Activated CD4-positive, alpha-beta memory T cell treated with anti-CD3 and anti-CD28 coated beads, Interleukin-2, amount 10 ng/mL, durations not matched to agents 7 days and 5 days (primary cell): ENCODE measurements at regions of chr5 and their contacts with region 1.

Region 1: GRCh38 chr5:132500931-132501630 is 10.5 kb upstream of the IRF1 start:
- DNase-seq: peak; percentile 78
- H3K4me3 Mint-ChIP-seq: no peak overlapping the region
- H3K27ac Mint-ChIP-seq: no peak overlapping the region
- H3K4me1 Mint-ChIP-seq: peaks cover 39% of the 10 kb centered on the region
- H3K27me3 Mint-ChIP-seq: peaks cover 3% of the 10 kb centered on the region

Region 2: GRCh38 chr5:132410451-132411381 is 90.4 kb before region 1 on chr5:
- CTCF ChIA-PET with region 1: interaction called, 16 read pairs
- POLR2A ChIA-PET with region 1: interaction called, 399 read pairs
- DNase-seq: peak; percentile 89
- H3K4me3 Mint-ChIP-seq: peak overlapping the region; percentile 95
- H3K27ac Mint-ChIP-seq: peak overlapping the region; percentile 99
- H3K4me1 Mint-ChIP-seq: peaks cover 59% of the 10 kb centered on the region
- H3K27me3 Mint-ChIP-seq: no peaks in the 10 kb centered on the region

Region 3: DNA sequence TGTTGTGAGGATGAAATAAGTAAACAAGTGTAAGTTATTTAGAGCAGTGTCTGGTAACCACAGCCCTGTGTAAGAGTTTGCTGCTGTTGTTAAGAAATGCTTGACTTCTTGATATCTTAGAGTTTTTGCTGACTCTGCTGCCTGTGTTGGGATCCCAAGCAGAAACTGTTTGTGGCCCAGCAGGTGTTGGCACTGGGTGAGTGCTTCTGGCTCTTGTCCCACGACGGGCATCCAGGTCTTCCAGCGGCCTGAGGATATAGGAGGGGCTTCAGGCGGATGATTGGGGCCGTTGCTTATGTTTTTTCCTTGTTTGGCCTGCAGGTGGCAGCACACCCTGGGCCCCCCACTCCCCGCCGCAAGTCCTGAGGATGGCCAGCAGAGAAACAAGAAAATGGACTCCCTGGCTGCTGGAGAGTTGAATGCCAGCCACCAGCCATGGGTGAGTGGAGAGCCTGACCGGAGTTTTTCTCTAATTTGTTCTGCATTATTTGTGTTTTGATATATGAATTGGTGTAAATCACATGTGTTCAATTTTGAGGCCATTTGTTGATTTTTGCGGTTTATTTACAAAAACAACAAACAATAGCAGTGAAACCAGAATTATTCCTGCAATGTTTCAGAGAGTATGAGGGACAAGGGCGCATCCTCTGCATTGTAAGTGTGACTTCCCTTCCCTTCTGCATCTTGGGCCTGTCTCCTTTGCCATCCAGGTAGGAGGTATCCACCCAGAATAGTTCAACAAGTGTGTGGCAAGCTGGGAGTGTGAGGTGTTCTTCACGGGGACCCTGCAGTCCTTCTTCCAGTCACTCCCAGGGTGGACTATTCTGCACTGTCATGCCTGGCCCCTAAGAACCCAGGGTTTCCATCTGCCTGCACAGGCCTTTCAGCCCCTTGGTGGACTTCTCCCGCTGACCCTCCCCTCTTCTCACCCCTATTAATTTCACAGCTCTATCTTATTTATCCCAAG is 81.3 kb before region 1 on chr5:
- CTCF ChIA-PET with region 1: interaction called, 34 read pairs
- POLR2A ChIA-PET with region 1: interaction called, 1,155 read pairs
- DNase-seq: peak; percentile 72
- H3K4me3 Mint-ChIP-seq: peak overlapping the region; percentile 65
- H3K27ac Mint-ChIP-seq: peak overlapping the region; percentile 91
- H3K4me1 Mint-ChIP-seq: peaks cover 95% of the 10 kb centered on the region
- H3K27me3 Mint-ChIP-seq: no peaks in the 10 kb centered on the region

Region 4: DNA sequence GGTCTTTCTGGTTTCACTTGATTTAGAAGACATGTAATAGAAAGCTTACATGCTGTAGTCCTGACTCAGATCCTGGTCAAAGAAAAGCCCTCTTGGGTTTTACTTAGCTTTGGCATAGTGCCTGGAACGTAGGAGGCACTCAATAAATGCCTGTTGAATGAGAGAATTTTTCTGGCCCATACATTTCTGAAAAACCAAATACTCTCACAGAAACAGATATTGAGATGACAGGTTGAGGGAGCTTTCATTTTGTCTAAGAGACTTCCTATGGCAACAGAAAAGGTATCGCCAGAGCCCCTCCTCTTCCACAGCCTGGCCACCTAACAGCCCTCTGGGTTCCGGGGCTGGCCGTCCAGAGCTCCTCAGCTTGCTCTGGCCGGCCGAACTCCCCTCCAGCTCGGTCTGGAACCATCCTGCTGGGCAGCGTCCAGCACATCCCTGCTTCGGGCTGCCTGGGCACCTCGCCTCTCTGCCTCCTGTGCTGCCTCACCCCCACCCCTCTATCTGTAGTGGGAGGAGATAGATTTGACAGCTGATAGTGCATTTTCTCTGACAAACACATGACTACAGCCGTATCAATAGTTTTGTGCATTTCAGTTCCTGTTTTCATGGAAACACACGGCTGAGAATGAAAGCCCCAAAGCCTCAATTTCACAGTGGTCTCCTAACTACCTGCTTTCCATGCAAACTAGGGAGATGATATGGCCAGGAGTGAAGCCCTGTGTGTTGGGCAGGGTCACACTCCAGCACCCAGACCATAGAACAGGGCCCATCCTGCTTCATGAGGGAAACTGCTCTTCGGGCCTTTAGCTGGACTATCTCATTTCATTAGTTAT is 173.8 kb after region 1 on chr5:
- CTCF ChIA-PET with region 1: no interaction called
- POLR2A ChIA-PET with region 1: no interaction called
- DNase-seq: peak; percentile 40
- H3K4me3 Mint-ChIP-seq: peak overlapping the region; percentile 68
- H3K27ac Mint-ChIP-seq: peak overlapping the region; percentile 87
- H3K4me1 Mint-ChIP-seq: peaks cover 41% of the 10 kb centered on the region
- H3K27me3 Mint-ChIP-seq: no peaks in the 10 kb centered on the region